ENCODE measurements at regions of chr2 and their contacts with region 1.

Region 1: GRCh38 chr2:212797484-212798205 is 259.0 kb upstream of the ERBB4 start:
- DNase-seq: no peak
- H3K4me3 ChIP-seq: no peak overlapping the region
- H3K27ac ChIP-seq: no peak overlapping the region
- H3K4me1 ChIP-seq: peaks cover 4% of the 10 kb centered on the region
- H3K27me3 ChIP-seq: no peaks in the 10 kb centered on the region
- CTCF ChIP-seq: no peak

Region 2: GRCh38 chr2:212677466-212677865 is 120.2 kb before region 1 on chr2:
- CTCF ChIA-PET with region 1: no interaction called
- dilution Hi-C with region 1: no loop called
- in situ Hi-C with region 1: no loop called
- intact Hi-C with region 1: no loop called
- DNase-seq: no peak
- H3K4me3 ChIP-seq: no peak overlapping the region
- H3K27ac ChIP-seq: no peak overlapping the region
- H3K4me1 ChIP-seq: no peaks in the 10 kb centered on the region
- H3K27me3 ChIP-seq: no peaks in the 10 kb centered on the region
- CTCF ChIP-seq: no peak

Region 3: GRCh38 chr2:212811036-212811805 is 13.6 kb after region 1 on chr2:
- CTCF ChIA-PET with region 1: no interaction called
- dilution Hi-C with region 1: no loop called
- in situ Hi-C with region 1: no loop called
- intact Hi-C with region 1: loop called (anchors 1 kb)
- DNase-seq: peak; percentile 36
- H3K4me3 ChIP-seq: no peak overlapping the region
- H3K27ac ChIP-seq: no peak overlapping the region
- H3K4me1 ChIP-seq: no peaks in the 10 kb centered on the region
- H3K27me3 ChIP-seq: no peaks in the 10 kb centered on the region
- CTCF ChIP-seq: no peak

Measured in mammary epithelial cell (primary cell).